ENCODE measurements at regions of chr11 and their contacts with region 1.

Region 1: DNA sequence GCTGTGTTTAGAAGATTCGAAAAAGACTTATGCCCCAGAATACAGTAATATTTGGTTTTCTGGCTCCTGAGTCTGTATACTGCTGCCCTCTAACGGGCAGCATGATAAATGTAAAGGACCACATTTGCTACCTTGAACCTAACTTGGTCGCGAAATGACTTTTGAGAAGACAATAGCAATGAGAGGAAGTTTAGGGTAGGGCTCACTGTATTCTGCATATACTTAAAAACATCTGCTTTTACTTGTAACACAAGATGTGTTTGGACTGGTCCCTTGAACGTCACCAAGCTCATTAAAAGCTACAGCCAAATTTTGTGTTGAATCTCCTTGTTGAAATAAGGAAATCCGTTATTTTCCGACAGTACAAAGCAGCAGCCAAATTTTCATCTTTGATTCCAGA is 309.1 kb downstream of the SWAP70 start:
- DNase-seq: no peak
- H3K4me3 ChIP-seq: no peak overlapping the region
- H3K27ac ChIP-seq: no peak overlapping the region
- H3K4me1 ChIP-seq: peaks cover 0 to 5% (median 2%) of the 10 kb centered on the region in 4 donors
- H3K27me3 ChIP-seq: no peaks in the 10 kb centered on the region
- CTCF ChIP-seq: peak; percentile 37 to 63 (median 60)
- EP300 ChIP-seq: no peak
- POLR2A ChIP-seq: no peak

Region 2: DNA sequence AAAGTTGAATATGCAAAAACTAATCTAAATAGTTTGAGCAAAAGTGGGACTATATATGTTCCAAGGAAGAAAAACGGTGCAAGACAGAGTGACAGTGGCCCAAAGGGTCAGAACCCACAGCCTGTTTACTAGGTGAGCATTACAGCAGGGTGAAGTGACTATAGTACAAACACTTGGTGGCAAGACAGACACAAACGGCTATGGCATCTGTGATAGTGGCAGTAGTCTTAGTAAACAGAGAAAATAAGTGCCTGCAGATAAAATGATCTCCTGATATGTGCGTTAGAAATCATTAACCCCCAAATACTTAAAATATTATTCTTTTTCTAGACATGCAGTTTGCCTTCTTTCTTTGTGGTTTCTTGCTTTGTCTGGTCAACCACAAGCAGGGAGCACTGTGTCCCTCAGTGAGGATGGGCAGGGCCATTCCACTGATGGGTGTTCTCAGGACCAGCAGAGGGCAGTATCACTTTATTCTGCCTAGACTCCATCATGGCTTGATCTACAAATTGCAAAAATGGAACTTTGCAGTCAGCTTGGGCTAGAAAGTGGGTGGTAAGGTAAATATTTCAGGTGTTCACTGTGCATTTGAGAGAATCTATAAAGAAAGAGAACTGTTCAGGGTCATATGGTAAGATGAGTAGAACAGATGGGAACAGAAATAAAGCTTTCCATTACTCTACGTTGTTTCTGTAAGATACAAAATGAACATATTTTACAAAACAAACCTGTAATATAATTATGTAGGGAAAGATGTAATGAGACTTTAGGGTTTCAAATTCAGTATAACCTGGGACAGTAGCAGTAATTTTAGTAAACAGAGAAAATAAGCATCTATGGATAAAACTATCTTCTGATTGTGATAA is 110.9 kb before region 1 on chr11:
- intact Hi-C with region 1: loop called (anchors 10 kb)
- DNase-seq: peak; percentile 74
- H3K4me3 ChIP-seq: no peak overlapping the region
- H3K27ac ChIP-seq: no peak overlapping the region
- H3K4me1 ChIP-seq: peaks cover 0 to 12% (median 7%) of the 10 kb centered on the region in 4 donors
- H3K27me3 ChIP-seq: no peaks in the 10 kb centered on the region
- CTCF ChIP-seq: peak; percentile 11 to 60 (median 57)
- EP300 ChIP-seq: no peak
- POLR2A ChIP-seq: no peak

Measured in sigmoid colon (tissue), 7 donors.